ENCODE measurements at regions of chr10 and their contacts with region 1.

Region 1: GRCh38 chr10:119377958-119378736 is 164.4 kb downstream of the RGS10 start:
- DNase-seq: no peak

Region 2: DNA sequence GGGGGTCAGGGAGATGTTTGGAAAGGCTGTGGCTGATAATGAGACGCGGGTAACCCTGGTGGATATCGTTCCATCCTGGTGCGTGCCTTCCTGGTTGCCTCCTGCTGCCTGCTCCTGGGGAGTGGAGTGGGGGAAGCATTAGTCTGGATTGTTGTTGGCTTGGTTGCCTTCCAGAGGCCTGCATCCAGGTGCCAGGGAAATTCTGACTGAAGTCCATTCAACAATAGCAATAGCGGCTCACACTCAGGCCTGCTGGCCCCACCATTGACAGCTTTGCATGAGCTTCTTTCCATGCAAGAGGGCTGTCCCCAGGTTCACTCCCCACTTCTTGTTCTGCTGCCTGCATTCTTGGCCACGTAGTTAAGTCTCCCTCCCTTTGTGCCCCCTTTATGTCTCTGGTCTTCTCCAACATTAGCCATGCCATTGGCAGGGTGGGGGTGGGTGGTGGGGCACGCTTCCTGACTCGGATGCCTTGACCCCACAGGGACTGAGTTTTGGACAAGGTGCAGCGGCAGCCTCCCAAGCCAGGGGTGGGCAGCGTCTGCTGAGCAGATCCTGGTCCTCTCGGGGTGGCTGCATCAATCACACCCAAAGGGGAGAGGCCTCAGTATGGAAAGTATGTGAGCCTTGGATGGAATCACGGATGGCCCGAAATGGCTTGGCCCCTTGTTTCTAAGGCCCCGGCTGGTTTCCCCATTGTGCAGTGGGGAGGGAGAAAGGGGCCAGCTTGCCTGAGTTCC is 20.6 kb before region 1 on chr10:
- intact Hi-C with region 1: loop called (anchors 2 kb)
- DNase-seq: no peak

Region 3: GRCh38 chr10:119367841-119368549 is 10.2 kb before region 1 on chr10:
- intact Hi-C with region 1: no loop called
- DNase-seq: no peak

Region 4: DNA sequence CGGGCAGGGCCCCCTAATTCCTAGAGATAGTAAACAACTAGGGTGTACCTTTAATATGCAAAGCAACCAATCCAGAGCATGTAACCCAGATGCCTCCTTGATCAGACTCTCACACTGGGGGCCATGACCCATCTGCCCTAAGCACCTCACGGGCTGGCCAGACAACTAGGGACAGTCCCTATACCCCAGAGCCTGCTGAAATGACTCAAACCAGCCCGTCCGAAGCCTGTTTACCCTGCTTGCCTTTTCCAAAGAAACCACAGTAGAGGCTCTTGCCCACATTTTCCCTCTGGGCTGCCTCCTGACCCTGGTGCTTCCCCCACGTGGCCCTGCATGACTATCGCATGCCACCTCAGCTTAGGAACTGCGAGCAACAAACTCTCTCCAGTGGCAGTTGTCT is 118.1 kb after region 1 on chr10:
- intact Hi-C with region 1: no loop called
- DNase-seq: no peak

Region 5: GRCh38 chr10:119526621-119527592 is 148.8 kb after region 1 on chr10:
- intact Hi-C with region 1: no loop called
- DNase-seq: peak; percentile 67

Region 6: GRCh38 chr10:119769886-119770285 is 391.7 kb after region 1 on chr10:
- intact Hi-C with region 1: no loop called
- DNase-seq: no peak